HepG2 (cell line): ENCODE measurements at regions of chr3 and their contacts with region 1.

Region 1: GRCh38 chr3:167684388-167684993 is 30.7 kb upstream of the WDR49 start:
- DNase-seq: peak; percentile 64
- ATAC-seq: peak; percentile 82
- H3K4me3 ChIP-seq: no peak overlapping the region
- H3K27ac ChIP-seq: no peak overlapping the region
- H3K4me1 ChIP-seq: no peaks in the 10 kb centered on the region
- H3K27me3 ChIP-seq: no peaks in the 10 kb centered on the region
- CTCF ChIP-seq: peak; percentile 54
- EP300 ChIP-seq: no peak
- POLR2A ChIP-seq: no peak
- RAD21 ChIP-seq: no peak

Region 2: GRCh38 chr3:167380004-167380689 is 304.3 kb before region 1 on chr3 and contains the start of gene ZBBX:
- CTCF ChIA-PET with region 1: interaction called, 3 read pairs
- POLR2A ChIA-PET with region 1: no interaction called
- in situ Hi-C with region 1: no loop called
- intact Hi-C with region 1: loop called (anchors 1 kb)
- DNase-seq: peak; percentile 70
- ATAC-seq: peak; percentile 98
- H3K4me3 ChIP-seq: peak within 1 kb of the TSS in 1 of 3 experiments; percentile 55; a peak in 1 of 6 replicates
- H3K27ac ChIP-seq: no peak within 1 kb of the TSS
- H3K4me1 ChIP-seq: peaks cover 12% of the 10 kb centered on the region
- H3K27me3 ChIP-seq: no peaks in the 10 kb centered on the region
- CTCF ChIP-seq: peak; percentile 91
- EP300 ChIP-seq: no peak
- POLR2A ChIP-seq: no peak
- RAD21 ChIP-seq: peak; percentile 64
- total RNA-seq, gene ZBBX: not detected in 2 replicates

Region 3: GRCh38 chr3:167740961-167741587 is 56.6 kb after region 1 on chr3:
- CTCF ChIA-PET with region 1: interaction called, 9 read pairs
- POLR2A ChIA-PET with region 1: no interaction called
- in situ Hi-C with region 1: no loop called
- intact Hi-C with region 1: loop called (anchors 1 kb)
- DNase-seq: peak; percentile 43
- ATAC-seq: peak; percentile 97
- H3K4me3 ChIP-seq: no peak overlapping the region
- H3K27ac ChIP-seq: no peak overlapping the region
- H3K4me1 ChIP-seq: peaks cover 49% of the 10 kb centered on the region
- H3K27me3 ChIP-seq: no peaks in the 10 kb centered on the region; a peak in 1 of 5 replicates
- CTCF ChIP-seq: peak; percentile 69
- EP300 ChIP-seq: no peak
- POLR2A ChIP-seq: no peak
- RAD21 ChIP-seq: peak; percentile 31; the same call in 1 of the 2 replicates

Region 4: DNA sequence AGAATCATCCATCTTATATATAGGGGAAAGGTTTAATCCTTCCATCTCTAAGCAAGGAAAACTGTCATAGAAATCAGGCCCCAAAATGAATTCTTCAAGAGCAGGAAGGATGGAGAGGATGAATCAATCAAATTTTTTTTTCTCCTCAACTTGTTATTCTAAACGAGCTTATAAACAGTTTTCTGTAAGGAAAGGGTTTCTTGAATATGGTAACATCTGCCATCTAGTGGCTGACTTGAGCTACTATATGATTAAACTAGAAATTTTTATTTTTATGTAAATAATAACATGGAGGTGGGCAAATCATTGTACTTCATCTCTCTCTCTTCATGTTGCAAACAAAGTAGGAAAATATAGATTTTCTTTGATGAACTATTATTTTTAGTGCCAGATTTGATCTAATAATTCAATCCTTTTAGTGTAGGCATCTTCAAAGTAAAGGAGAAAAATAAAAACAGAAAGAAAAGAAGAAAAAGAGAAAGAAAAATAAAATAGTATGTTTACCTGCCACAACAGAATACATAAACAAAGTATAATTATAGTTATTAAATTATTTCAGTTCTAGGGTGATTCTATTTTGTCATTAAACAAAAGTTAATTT is 197.7 kb after region 1 on chr3:
- CTCF ChIA-PET with region 1: no interaction called
- POLR2A ChIA-PET with region 1: no interaction called
- in situ Hi-C with region 1: no loop called
- intact Hi-C with region 1: loop called (anchors 1 kb)
- DNase-seq: peak; percentile 30
- ATAC-seq: 0 out of 3 replicates have a peak, but pooled peaks have one; percentile 31
- H3K4me3 ChIP-seq: no peak overlapping the region
- H3K27ac ChIP-seq: no peak overlapping the region
- H3K4me1 ChIP-seq: peaks cover 10% of the 10 kb centered on the region
- H3K27me3 ChIP-seq: no peaks in the 10 kb centered on the region; a peak in 1 of 5 replicates
- CTCF ChIP-seq: peak; percentile 50
- EP300 ChIP-seq: no peak
- POLR2A ChIP-seq: no peak
- RAD21 ChIP-seq: no peak